Cardiac septum (tissue), 1 donor: ENCODE measurements at regions of chr7 and their contacts with region 1.

Region 1: DNA sequence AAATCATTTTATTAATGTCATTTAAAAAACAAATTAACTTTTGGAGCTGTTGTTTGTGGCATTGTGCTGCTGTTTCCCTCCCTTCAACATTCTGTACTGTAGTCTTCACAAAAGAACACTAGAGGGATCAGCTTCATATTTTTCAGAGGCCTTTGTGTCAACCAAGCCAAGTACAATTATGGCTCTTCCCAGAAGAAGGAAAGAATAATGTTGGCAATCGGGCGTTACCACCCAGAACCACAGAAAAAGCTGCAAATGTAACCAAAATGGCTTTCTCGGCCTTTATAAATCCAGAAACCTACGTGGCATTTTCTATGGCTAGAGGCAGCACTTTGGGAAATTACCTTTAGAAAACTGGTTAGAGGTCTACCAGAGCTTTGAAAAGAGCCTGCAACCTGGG is 98.8 kb upstream of the COL1A2 start:
- DNase-seq: no peak

Region 2: GRCh38 chr7:94374231-94374630 is 78.4 kb after region 1 on chr7:
- intact Hi-C with region 1: loop called (anchors 2 kb)
- DNase-seq: peak; percentile 83

Region 3: GRCh38 chr7:94395141-94396036 is 99.5 kb after region 1 on chr7:
- intact Hi-C with region 1: loop called (anchors 2 kb)
- DNase-seq: no peak

Region 4: DNA sequence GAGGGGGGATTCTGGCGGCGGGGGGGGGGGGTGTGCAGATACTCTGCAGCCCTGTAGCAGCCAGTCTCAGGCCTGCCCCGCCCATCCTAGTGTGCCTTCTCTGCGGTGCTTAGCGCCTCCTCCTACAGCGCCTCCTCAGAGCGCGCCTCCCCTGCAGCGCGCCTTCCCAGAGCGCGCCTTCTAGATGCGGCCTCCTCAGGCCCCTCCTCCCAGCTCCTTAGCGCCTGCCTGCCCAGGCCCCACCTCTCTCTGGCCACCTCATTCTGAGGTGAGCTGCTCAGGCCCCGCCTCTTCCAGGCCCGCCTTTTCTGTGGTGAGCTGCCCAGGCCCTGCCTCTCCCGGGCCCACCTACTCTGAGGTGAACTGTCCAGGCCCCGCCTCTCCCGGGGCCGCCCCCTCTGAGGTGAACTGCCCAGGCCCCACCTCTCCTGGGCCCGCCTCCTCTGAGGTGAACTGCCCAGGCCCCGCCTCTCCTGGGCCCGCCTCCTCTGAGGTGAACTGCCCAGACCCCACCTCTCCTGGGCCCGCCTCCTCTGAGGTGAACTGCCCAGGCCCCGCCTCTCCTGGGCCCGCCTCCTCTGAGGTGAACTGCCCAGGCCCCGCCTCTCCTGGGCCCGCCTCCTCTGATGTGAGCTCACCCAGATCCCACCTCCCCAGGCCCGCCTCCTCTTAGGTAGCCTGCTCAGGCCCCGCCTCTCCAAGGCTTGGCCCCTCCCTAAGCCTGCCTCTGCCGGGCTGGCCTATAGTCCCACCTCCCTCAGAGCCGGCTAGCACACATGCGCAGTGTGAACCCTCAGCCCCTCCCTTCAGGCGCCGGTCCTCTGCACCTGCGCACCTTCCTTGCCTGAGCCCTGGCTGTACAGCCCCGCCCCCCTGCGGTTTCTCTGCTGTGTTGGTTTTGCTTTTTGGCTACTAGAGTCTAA is 362.2 kb after region 1 on chr7:
- intact Hi-C with region 1: loop called (anchors 10 kb)
- DNase-seq: peak; percentile 96

Region 5: DNA sequence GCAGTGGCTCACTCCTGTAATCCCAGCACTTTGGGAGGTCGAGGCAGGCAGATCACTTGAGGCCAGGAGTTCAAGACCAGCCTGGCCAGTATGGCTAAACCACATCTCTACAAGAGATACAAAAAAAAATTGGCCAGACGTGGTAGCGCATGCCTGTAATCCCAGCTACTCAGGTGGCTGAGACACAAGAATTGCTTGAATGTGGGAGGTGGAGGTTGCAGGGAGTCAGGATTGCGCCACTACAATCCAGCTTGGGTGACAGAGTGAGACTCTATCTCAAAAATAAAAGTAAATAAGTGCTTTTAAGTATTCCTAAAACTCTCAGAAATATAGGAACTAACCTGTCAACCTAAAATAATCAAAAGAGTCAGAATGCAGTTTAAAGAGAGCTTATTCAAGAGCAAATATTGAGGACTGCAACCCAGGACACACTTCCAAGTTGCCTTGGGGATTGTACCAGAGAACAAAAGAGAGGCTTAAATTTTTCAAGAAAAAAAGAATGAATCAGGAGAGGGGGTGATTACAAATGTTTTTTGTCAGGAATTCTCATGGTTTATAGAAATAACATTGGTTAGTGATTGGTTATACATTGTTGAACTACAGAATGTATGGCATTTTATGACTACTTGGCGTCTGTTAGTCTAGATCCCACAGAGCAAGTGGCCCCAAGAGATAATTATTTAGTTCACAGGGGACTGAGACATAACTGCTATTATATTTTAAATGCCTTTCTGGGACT is 578.4 kb after region 1 on chr7:
- intact Hi-C with region 1: no loop called
- DNase-seq: no peak